Activated CD4-positive, alpha-beta memory T cell treated with anti-CD3 and anti-CD28 coated beads for 36 hours (primary cell): ENCODE measurements at regions of chr13 and their contacts with region 1.

Region 1: DNA sequence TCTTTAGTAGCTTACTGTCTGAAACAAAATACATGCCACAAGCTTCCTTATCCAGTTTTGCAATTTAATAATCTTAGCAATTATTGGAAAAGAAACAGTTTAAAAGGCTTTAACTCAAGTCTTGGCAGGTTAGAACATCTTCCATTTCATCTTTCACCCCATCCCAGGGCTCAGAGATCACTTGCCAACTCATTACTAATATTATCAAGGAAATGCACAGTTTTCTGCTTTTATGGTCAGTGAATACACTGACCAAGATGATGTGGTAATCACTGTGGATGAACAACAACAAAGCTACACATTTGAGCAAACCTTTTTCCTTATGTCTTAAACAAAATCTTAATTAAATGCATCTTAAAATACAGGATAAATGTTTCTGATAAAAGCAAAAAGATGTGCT is 48.0 kb upstream of the ITM2B start:
- DNase-seq: no peak
- H3K4me3 Mint-ChIP-seq: no peak overlapping the region
- H3K27ac Mint-ChIP-seq: no peak overlapping the region
- H3K4me1 Mint-ChIP-seq: peaks cover 51% of the 10 kb centered on the region
- H3K27me3 Mint-ChIP-seq: no peaks in the 10 kb centered on the region

Region 2: GRCh38 chr13:48222358-48223301 is 37.6 kb after region 1 on chr13:
- CTCF ChIA-PET with region 1: no interaction called
- POLR2A ChIA-PET with region 1: interaction called, 3 read pairs
- intact Hi-C with region 1: loop called (anchors 1 kb)
- DNase-seq: peak; percentile 30
- H3K4me3 Mint-ChIP-seq: peak overlapping the region; percentile 35
- H3K27ac Mint-ChIP-seq: no peak overlapping the region
- H3K4me1 Mint-ChIP-seq: peaks cover 51% of the 10 kb centered on the region
- H3K27me3 Mint-ChIP-seq: no peaks in the 10 kb centered on the region

Region 3: GRCh38 chr13:48580185-48580803 is 395.3 kb after region 1 on chr13:
- CTCF ChIA-PET with region 1: no interaction called
- POLR2A ChIA-PET with region 1: no interaction called
- intact Hi-C with region 1: no loop called
- DNase-seq: peak; percentile 75
- H3K4me3 Mint-ChIP-seq: no peak overlapping the region
- H3K27ac Mint-ChIP-seq: no peak overlapping the region
- H3K4me1 Mint-ChIP-seq: peaks cover 4% of the 10 kb centered on the region
- H3K27me3 Mint-ChIP-seq: peaks cover 7% of the 10 kb centered on the region